ENCODE measurements at regions of chr14 and their contacts with region 1.

Region 1: GRCh38 chr14:49971156-49972130 is 78.6 kb downstream of the ARF6 start:
- DNase-seq: peak; percentile 63
- H3K4me3 Mint-ChIP-seq: peak overlapping the region; percentile 72
- H3K27ac Mint-ChIP-seq: peak overlapping the region; percentile 98
- H3K4me1 Mint-ChIP-seq: peaks cover 57% of the 10 kb centered on the region
- H3K27me3 Mint-ChIP-seq: no peaks in the 10 kb centered on the region

Region 2: GRCh38 chr14:49867831-49868723 is 103.4 kb before region 1 on chr14:
- CTCF ChIA-PET with region 1: interaction called, 42 read pairs
- POLR2A ChIA-PET with region 1: interaction called, 70 read pairs
- DNase-seq: peak; percentile 99
- H3K4me3 Mint-ChIP-seq: peak overlapping the region; percentile 90
- H3K27ac Mint-ChIP-seq: peak overlapping the region; percentile 98
- H3K4me1 Mint-ChIP-seq: peaks cover 26% of the 10 kb centered on the region
- H3K27me3 Mint-ChIP-seq: no peaks in the 10 kb centered on the region

Region 3: DNA sequence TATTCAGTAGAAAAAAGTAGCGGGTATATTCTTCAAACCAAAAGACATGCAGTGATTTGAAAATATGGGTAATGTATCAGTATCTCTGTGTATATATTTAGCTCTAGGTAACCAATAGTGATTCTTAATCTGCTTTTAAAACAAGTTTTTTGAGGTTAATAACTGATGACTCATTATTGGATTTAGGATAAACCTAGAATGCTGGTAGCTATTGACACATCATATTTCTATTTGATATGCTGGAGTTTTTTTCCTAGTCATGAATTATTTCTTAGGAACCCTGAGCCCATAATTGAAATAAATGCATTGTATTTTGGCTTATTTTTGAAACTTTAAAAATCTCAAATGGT is 63.0 kb before region 1 on chr14:
- CTCF ChIA-PET with region 1: interaction called, 5 read pairs
- POLR2A ChIA-PET with region 1: interaction called, 21 read pairs
- DNase-seq: no peak
- H3K4me3 Mint-ChIP-seq: peak overlapping the region; percentile 21
- H3K27ac Mint-ChIP-seq: peak overlapping the region; percentile 49
- H3K4me1 Mint-ChIP-seq: peaks cover 45% of the 10 kb centered on the region
- H3K27me3 Mint-ChIP-seq: no peaks in the 10 kb centered on the region

Region 4: DNA sequence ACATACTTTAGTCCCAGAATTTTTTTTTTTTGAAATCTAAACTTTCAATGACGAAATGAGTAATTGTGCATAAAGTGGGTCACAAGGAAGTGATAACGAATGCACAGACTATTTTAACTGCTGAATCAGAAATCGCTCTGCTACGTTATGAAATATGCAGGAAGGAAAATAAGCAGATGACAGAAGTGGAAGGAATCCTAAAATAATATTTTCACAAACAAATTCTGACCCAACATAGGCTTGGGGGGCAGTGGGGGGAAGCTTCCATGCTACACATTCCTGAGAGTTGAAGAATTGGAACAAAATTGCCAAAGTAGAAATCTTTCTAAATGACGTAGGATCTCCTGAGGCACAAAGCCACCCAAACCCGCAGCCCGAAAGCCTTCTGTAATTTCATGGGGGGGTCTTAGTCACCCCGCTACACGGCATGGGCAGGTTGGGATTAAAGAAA is 11.1 kb after region 1 on chr14:
- CTCF ChIA-PET with region 1: interaction called, 4 read pairs
- POLR2A ChIA-PET with region 1: interaction called, 43 read pairs
- DNase-seq: no peak
- H3K4me3 Mint-ChIP-seq: peak overlapping the region; percentile 43
- H3K27ac Mint-ChIP-seq: peak overlapping the region; percentile 78
- H3K4me1 Mint-ChIP-seq: peaks cover 75% of the 10 kb centered on the region
- H3K27me3 Mint-ChIP-seq: no peaks in the 10 kb centered on the region

Region 5: DNA sequence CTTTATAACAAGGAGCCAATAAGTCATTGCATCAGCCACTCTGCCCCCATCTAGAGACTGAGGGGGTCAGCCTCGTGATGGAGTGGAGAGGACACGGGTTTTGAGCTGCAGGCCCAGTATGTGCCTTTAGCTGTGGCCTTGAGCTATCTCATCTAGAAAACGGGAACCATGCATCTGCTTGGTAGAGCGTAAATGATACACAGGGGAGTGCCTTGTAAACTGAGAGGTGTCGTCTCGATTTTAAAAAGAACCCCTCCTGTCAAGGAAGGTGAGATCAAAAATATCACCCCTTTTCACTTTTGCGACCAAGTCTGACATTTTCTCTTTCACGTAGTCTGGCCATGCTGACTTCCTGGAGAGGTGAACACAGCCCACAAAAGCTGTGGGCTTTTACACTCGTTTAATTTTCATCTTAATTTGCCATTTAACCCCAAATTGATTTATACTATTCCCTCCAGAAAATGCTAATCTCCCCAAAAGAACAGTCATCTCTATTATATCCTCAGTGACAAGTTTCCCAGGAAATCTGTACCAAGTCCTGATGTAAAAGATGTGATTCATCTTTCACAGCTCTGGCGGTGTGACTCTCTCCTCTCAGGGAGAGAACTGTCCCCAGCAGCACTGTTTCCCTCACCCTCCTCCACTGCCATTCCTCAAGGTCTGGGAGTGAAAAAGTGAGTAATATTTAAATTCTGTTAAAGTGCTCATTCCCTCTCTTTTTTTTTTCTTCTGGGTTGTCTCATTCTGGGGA is 114.3 kb after region 1 on chr14:
- CTCF ChIA-PET with region 1: interaction called, 3 read pairs
- POLR2A ChIA-PET with region 1: interaction called, 27 read pairs
- DNase-seq: no peak
- H3K4me3 Mint-ChIP-seq: peak overlapping the region; percentile 28
- H3K27ac Mint-ChIP-seq: peak overlapping the region; percentile 98
- H3K4me1 Mint-ChIP-seq: peaks cover 86% of the 10 kb centered on the region
- H3K27me3 Mint-ChIP-seq: peaks cover 4% of the 10 kb centered on the region

Measured in activated CD4-positive, alpha-beta memory T cell treated with anti-CD3 and anti-CD28 coated beads, Interleukin-2, amount 10 ng/mL, durations not matched to agents 7 days and 5 days (primary cell).